Activated CD4-positive, alpha-beta T cell treated with anti-CD3 and anti-CD28 coated beads, Interleukin-2, amount 10 ng/mL, durations not matched to agents 24 days and 14 days (primary cell): ENCODE measurements at regions of chr3 and their contacts with region 1.

Region 1: DNA sequence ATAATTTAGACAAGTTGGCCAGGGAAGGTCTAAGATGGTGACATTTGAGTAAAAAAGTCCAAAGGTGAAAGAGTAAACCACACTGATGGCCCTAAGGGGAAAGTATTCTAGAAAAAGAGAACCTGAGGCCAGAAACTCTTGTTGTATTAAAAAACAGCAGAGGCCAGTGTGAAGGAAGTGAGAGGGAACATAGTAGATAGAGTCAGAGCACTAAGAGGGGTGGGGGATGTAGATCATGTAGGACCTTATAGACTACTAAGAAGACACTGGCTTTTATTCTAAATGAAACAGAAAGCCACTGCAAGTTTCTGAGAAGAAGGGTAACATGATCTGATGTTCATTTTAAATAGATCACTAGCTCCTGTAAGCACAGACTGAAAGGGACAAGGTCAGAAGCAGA is 14.5 kb downstream of the POLQ start:
- DNase-seq: no peak
- H3K4me3 Mint-ChIP-seq: no peak overlapping the region
- H3K27ac Mint-ChIP-seq: peak overlapping the region; percentile 68
- H3K4me1 Mint-ChIP-seq: peaks cover 14% of the 10 kb centered on the region
- H3K27me3 Mint-ChIP-seq: no peaks in the 10 kb centered on the region

Region 2: GRCh38 chr3:121443456-121443855 is 87.8 kb before region 1 on chr3:
- intact Hi-C with region 1: no loop called
- DNase-seq: no peak
- H3K4me3 Mint-ChIP-seq: no peak overlapping the region
- H3K27ac Mint-ChIP-seq: no peak overlapping the region
- H3K4me1 Mint-ChIP-seq: peaks cover 3% of the 10 kb centered on the region
- H3K27me3 Mint-ChIP-seq: no peaks in the 10 kb centered on the region

Region 3: DNA sequence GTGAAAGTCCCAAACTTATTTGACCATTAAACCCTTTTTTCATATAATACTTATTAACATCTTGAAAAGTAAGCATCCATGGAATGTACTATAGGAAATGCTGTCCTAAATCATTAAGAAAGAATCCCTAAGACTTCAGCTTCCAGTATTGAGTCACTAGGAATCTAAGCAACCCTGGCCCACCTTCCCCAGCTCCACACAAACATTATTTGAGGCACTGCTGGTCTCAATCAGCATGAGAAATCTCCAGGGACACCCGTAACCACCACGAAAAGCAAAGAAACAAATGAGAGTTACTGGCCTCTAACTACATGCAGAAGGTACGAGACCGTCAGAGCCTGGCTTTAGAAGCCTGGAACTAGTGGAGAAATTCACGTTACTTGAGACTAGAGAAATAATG is 53.7 kb before region 1 on chr3:
- intact Hi-C with region 1: loop called (anchors 10 kb)
- DNase-seq: no peak
- H3K4me3 Mint-ChIP-seq: no peak overlapping the region
- H3K27ac Mint-ChIP-seq: no peak overlapping the region
- H3K4me1 Mint-ChIP-seq: peaks cover 2% of the 10 kb centered on the region
- H3K27me3 Mint-ChIP-seq: no peaks in the 10 kb centered on the region

Region 4: GRCh38 chr3:121545574-121546455 is 14.5 kb after region 1 on chr3 and contains the start of gene POLQ:
- intact Hi-C with region 1: no loop called
- DNase-seq: peak; percentile 96
- H3K4me3 Mint-ChIP-seq: peak within 1 kb of the TSS; percentile 99
- H3K27ac Mint-ChIP-seq: peak within 1 kb of the TSS; percentile 99
- H3K4me1 Mint-ChIP-seq: peaks cover 30% of the 10 kb centered on the region
- H3K27me3 Mint-ChIP-seq: no peaks in the 10 kb centered on the region
- total RNA-seq, gene POLQ: 30.3 and 31.0 TPM in 2 replicates

Region 5: DNA sequence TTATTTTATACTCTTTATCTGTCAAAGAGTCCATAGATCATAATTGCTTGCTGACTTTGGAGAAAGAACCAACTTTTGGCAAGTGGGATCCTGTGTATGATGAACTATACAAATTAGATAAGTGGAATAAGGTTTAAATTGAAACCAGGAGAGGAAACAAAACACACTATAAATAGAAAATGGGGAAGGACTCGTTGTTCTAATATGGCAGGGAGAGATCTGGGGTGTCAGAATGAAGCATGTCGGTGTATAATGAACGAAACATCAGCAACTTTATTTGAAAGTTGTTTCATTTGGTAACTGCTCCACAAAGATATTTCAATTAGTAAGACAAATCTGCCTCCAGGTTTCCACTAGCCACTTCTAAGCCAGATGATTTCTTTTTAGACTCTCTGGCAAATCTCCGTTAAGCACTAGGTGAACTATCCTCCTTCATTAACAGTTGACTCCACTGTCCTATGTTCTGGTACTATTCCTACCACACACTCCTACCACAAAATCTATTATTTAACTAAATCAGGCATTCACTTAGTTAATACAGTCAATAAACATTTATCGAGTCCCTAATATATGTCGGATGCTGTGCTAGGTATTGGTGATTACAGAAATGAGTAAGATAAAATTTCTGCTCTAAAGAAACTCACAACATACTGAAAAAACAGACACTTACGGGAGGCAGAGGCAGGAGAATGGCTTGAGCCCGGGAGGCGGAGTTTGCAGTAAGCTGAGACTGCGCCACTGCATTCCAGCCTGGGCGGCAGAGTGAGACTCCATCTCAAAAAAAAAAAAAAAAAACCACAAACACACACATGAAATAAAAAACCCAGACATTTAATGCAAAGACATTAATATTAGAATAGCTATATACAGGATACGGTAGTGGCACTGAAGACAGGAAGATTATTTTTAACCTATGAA is 383.1 kb after region 1 on chr3:
- intact Hi-C with region 1: no loop called
- DNase-seq: no peak
- H3K4me3 Mint-ChIP-seq: no peak overlapping the region
- H3K27ac Mint-ChIP-seq: no peak overlapping the region
- H3K4me1 Mint-ChIP-seq: peaks cover 2% of the 10 kb centered on the region
- H3K27me3 Mint-ChIP-seq: no peaks in the 10 kb centered on the region